ENCODE measurements at regions of chr7 and their contacts with region 1.

Region 1: GRCh38 chr7:140653319-140654108 is 12.9 kb upstream of the DENND2A start:
- DNase-seq: peak; percentile 67
- ATAC-seq: peak; percentile 93
- H3K4me3 ChIP-seq: no peak overlapping the region
- H3K27ac ChIP-seq: no peak overlapping the region
- H3K4me1 ChIP-seq: no peaks in the 10 kb centered on the region
- H3K27me3 ChIP-seq: no peaks in the 10 kb centered on the region; the same call in 1 of the 2 replicates
- CTCF ChIP-seq: peak; percentile 90

Region 2: DNA sequence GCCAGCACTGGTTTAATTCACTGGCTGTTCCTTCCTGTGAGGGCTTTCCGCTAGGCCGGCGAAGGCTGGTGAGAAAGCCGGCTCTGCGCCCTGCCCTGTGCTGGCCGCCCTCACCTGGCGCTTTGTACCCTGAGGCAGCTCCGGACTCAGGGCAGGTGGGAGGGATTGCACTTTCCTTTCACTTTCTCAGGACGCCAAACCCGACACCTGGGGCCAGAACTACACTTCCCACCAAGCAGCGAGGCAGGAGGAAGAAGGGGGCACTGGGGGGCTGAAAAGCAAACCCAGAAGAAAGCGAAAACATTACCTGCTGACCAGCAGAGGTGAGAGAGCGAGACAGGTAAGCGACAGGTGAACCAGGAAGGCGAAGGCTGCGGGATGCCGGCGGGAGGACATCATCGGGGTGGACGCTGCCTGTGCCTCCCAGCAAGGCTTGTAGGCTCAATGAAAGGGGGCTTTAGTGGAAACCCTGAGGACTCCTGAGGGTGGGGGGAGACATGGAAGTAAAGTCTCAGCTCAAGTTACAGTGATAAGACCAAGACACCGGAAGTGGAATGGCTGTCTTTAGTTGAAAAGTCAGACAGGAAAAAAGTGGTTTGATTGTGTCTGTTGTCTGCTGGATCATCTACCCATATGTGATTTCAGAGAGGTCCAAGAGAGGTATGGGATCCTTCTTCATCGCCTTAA is 249.5 kb before region 1 on chr7 and contains the start of gene RAB19:
- CTCF ChIA-PET with region 1: no interaction called
- POLR2A ChIA-PET with region 1: no interaction called
- in situ Hi-C with region 1: no loop called
- intact Hi-C with region 1: no loop called
- DNase-seq: no peak
- ATAC-seq: peak; percentile 57
- H3K4me3 ChIP-seq: peak within 1 kb of the TSS; percentile 36 to 59
- H3K27ac ChIP-seq: peak within 1 kb of the TSS; percentile 56
- H3K4me1 ChIP-seq: peaks cover 19% of the 10 kb centered on the region
- H3K27me3 ChIP-seq: no peaks in the 10 kb centered on the region
- CTCF ChIP-seq: no peak
- total RNA-seq, gene RAB19: 0.92 TPM

Region 3: GRCh38 chr7:140475747-140476348 is 177.7 kb before region 1 on chr7:
- CTCF ChIA-PET with region 1: interaction called, 7 read pairs
- POLR2A ChIA-PET with region 1: no interaction called
- in situ Hi-C with region 1: no loop called
- intact Hi-C with region 1: loop called (anchors 1 kb)
- DNase-seq: no peak
- ATAC-seq: no peak
- H3K4me3 ChIP-seq: no peak overlapping the region
- H3K27ac ChIP-seq: no peak overlapping the region
- H3K4me1 ChIP-seq: 0 out of 2 replicates have a peak, but pooled peaks cover 10% of the 10 kb centered on the region
- H3K27me3 ChIP-seq: no peaks in the 10 kb centered on the region
- CTCF ChIP-seq: no peak; the same call in 1 of the 2 replicates

Region 4: GRCh38 chr7:140517546-140518369 is 135.8 kb before region 1 on chr7:
- CTCF ChIA-PET with region 1: interaction called, 30 read pairs
- POLR2A ChIA-PET with region 1: no interaction called
- in situ Hi-C with region 1: no loop called
- intact Hi-C with region 1: loop called (anchors 1 kb)
- DNase-seq: peak; percentile 85
- ATAC-seq: peak; percentile 98
- H3K4me3 ChIP-seq: no peak overlapping the region
- H3K27ac ChIP-seq: no peak overlapping the region
- H3K4me1 ChIP-seq: no peaks in the 10 kb centered on the region
- H3K27me3 ChIP-seq: no peaks in the 10 kb centered on the region
- CTCF ChIP-seq: peak; percentile 90

Measured in Panc1 (cell line).